ENCODE measurements at regions of chr19 and their contacts with region 1.

Region 1: GRCh38 chr19:35578707-35579106 is 7.3 kb upstream of the PMIS2 start:
- DNase-seq: no peak
- H3K4me3 ChIP-seq: no peak overlapping the region
- H3K27ac ChIP-seq: no peak overlapping the region
- H3K4me1 ChIP-seq: no peaks in the 10 kb centered on the region
- H3K27me3 ChIP-seq: no peaks in the 10 kb centered on the region
- CTCF ChIP-seq: no peak
- EP300 ChIP-seq: no peak
- POLR2A ChIP-seq: no peak

Region 2: GRCh38 chr19:35363001-35363590 is 215.6 kb before region 1 on chr19:
- in situ Hi-C with region 1: no loop called
- intact Hi-C with region 1: no loop called
- DNase-seq: no peak
- H3K4me3 ChIP-seq: no peak overlapping the region
- H3K27ac ChIP-seq: no peak overlapping the region
- H3K4me1 ChIP-seq: no peaks in the 10 kb centered on the region
- H3K27me3 ChIP-seq: no peaks in the 10 kb centered on the region
- CTCF ChIP-seq: no peak
- EP300 ChIP-seq: no peak
- POLR2A ChIP-seq: no peak

Region 3: DNA sequence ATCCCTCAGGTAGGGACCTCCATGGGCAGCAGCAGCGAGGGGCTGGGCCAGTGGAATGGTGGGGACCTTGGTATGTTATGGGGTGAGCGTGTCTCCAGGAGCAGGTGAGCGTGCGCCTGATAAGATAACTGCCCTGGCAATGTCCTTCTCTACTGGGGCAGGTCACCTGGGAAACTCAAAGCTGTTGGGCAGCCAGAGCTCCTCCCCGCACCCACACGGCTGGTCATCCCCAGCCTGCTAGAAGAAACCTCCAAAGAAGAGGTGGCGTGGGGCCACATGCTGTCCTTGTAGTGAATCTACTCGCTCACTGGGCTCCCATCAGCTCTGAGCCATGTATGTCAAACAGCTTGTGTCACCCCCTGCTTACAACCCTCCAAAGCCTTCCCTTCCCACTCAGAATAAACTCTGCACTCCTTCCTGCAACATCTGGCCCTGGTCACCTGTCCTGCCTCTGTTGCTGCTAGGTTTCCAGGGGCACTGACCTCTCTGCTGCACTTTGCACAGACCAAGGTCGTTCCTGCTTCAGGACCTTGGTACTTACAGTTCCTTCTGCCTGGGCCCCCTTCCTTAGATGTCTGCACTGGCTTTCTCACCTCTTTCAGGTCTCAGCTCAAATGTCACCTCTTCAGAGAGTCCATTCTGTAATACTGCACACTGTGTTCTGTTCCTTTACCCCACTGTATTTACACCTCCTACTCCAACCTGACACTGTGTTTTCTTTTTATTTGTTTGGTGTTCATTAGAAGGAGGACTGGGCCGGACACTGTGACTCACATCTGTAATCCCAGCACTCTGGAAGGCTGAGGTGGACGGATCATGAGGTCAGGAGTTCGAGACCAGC is 13.5 kb before region 1 on chr19:
- in situ Hi-C with region 1: no loop called
- intact Hi-C with region 1: loop called (anchors 1 kb)
- DNase-seq: no peak
- H3K4me3 ChIP-seq: no peak overlapping the region
- H3K27ac ChIP-seq: no peak overlapping the region
- H3K4me1 ChIP-seq: no peaks in the 10 kb centered on the region
- H3K27me3 ChIP-seq: peaks cover 18% of the 10 kb centered on the region
- CTCF ChIP-seq: no peak
- EP300 ChIP-seq: no peak
- POLR2A ChIP-seq: no peak